ENCODE measurements at regions of chr12 and their contacts with region 1.

Region 1: GRCh38 chr12:56007564-56008559 is 10.8 kb downstream of the SUOX start:
- DNase-seq: peak; percentile 55
- H3K4me3 Mint-ChIP-seq: peak overlapping the region; percentile 92
- H3K27ac Mint-ChIP-seq: peak overlapping the region; percentile 88
- H3K4me1 Mint-ChIP-seq: peaks cover 32% of the 10 kb centered on the region
- H3K27me3 Mint-ChIP-seq: peaks cover 3% of the 10 kb centered on the region

Region 2: GRCh38 chr12:55966408-55967281 is 41.2 kb before region 1 on chr12 and contains the start of gene CDK2:
- intact Hi-C with region 1: loop called (anchors 1 kb)
- DNase-seq: peak; percentile 89
- H3K4me3 Mint-ChIP-seq: peak within 1 kb of the TSS; percentile 98
- H3K27ac Mint-ChIP-seq: peak within 1 kb of the TSS; percentile 90
- H3K4me1 Mint-ChIP-seq: peaks cover 34% of the 10 kb centered on the region
- H3K27me3 Mint-ChIP-seq: no peaks in the 10 kb centered on the region
- total RNA-seq, gene CDK2: 93.5 and 109 TPM in 2 replicates

Region 3: DNA sequence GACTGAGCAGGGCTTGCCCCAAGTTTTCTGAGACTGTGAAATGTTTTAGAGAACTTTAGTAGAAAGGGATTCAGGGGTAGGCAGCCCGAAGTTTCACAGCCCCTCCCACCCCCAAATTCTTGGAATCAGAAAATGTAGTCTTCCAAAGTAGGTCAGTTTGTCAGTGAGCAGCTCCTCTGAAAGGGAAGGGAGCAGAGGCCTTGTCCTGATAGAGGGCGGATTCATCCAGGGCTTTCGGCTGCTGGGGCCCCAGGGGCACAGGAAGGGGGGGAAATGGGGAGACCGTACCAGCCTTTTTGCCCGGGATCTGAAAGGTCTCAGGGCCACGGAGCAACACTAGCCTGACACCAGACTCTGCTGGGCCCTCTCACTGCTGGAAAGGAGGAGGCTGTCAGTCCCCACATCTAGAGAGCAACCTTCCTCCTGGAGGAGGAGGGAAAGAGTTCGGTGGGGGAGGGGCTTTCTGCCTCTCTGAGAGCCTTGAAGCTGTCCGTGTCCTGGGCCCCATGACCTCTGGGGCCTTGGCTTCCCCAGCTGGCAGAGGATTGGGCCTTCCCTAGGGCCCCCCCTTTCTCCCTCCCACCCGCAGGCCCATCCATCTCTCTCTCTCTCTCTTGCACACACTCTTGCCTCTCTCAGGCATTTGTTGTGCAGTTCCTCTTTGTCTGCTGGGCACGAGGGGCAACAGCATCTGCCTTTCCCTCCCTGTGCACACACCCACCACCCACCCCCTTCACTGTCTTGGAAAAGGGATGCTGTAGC is 12.7 kb after region 1 on chr12 and contains the start of gene IKZF4:
- intact Hi-C with region 1: loop called (anchors 1 kb)
- DNase-seq: no peak
- H3K4me3 Mint-ChIP-seq: peak within 1 kb of the TSS; percentile 97
- H3K27ac Mint-ChIP-seq: peak within 1 kb of the TSS; percentile 98
- H3K4me1 Mint-ChIP-seq: peaks cover 45% of the 10 kb centered on the region
- H3K27me3 Mint-ChIP-seq: no peaks in the 10 kb centered on the region
- total RNA-seq, gene IKZF4: 31.9 and 35.7 TPM in 2 replicates

Region 4: DNA sequence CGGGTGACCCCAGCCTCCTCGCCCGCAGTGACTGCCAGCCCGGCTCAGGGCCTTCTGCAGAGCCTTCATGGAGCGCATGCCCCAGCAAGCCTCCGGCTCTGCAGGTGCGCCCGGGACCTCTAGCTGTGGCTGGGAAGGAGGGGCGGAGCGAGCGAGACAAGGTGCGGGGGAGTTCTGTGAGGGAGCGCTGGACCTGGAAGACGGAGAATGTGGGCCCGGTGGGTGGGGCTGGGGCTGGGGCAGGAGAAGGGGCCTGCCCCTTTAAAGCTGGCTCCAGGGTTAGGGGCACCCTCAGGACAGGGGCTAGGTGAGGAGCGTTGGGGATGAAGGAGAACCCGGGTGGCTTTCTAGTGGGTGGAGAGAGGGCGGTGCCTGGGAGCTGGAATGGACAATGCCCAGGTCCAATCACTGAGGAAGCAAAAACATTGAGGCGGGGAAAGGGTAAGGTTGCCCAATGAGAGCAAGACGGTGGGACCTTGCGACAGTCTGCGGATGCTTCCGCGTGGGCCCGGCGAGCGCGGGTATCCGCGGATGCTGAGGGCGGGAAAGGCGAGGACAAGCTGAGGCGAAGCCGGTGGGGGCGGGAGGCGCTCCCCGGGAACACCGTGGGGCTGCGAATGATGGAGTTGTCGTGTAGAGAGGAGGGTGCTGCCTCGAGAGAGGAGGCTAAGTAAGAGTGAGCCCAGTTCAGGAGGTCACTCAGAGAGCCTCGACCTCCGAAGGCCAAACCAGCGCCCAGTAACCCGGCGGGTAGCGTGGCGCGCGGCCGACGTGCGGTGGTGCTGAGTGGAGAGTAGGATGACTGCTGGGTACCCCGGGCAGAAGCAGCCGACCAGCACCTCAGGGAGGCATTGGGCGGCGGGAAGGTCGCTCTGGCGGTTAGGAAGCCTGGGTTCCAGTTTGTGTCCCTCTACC is 480.4 kb after region 1 on chr12 and contains the start of gene GLS2:
- intact Hi-C with region 1: no loop called
- DNase-seq: peak; percentile 60
- H3K4me3 Mint-ChIP-seq: peak within 1 kb of the TSS; percentile 85
- H3K27ac Mint-ChIP-seq: no peak within 1 kb of the TSS
- H3K4me1 Mint-ChIP-seq: peaks cover 22% of the 10 kb centered on the region
- H3K27me3 Mint-ChIP-seq: peaks cover 48% of the 10 kb centered on the region
- total RNA-seq, gene GLS2: 1.5 and 2.6 TPM in 2 replicates